ENCODE measurements at regions of chr2 and their contacts with region 1.

Region 1: DNA sequence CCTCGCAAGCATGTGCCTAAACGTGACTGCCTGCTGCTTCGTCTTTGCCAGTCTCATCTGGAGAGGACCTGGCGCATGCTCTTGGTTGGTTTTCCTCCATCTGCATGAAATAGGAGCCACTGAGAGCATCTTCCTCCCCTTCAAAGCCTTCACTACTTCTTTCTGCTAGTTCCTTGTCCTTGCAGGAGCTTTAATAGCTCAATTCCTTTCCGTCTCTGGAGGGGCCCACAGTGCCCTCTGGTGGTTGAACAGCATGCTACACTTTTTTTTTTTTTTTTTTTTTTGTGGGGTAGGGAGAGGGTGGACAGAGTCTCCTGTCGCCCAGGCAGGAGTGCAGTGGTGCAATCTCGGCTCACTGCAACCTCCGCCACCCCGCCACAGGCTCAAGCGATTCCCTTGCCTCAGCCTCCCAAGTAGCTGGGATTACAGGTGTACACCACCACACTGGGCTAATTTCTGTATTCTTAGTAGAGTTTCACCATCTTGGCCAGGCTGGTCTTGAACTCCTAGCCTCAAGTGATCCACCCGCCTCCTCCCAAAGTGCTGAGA is 59.6 kb downstream of the SP110 start:
- DNase-seq: peak in 3 of 5 donors; percentile 45 to 66 (median 52)
- ATAC-seq: peak; percentile 25 to 76 (median 70)
- H3K4me3 ChIP-seq: no peak overlapping the region
- H3K27ac ChIP-seq: no peak overlapping the region
- H3K4me1 ChIP-seq: peaks cover 0 to 4% (median 0%) of the 10 kb centered on the region in 12 donors
- H3K27me3 ChIP-seq: no peaks in the 10 kb centered on the region
- CTCF ChIP-seq: peak; percentile 61 to 85 (median 81)
- POLR2A ChIP-seq: no peak

Region 2: DNA sequence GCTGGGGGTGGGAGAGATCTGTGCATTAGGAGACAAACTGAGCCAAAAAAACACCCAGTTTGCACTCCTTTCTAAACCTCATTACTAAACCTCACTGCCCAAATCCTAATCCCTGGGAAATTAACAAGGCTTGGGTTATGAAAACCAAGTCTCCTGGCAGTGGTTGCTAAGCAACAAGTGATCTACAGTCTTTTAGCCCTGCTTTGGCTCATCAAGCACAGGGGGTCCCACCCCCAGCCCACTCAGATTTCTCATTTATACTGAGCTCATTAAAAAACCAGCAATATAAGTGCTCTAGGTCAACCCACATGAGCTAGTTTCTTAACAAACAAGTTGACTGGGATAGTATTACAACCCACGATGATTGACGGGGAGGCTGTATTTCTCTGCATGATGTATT is 464.2 kb before region 1 on chr2:
- intact Hi-C with region 1: no loop called
- DNase-seq: no peak
- ATAC-seq: no peak
- H3K4me3 ChIP-seq: no peak overlapping the region
- H3K27ac ChIP-seq: no peak overlapping the region
- H3K4me1 ChIP-seq: no peaks in the 10 kb centered on the region
- H3K27me3 ChIP-seq: peaks cover 0 to 3% (median 0%) of the 10 kb centered on the region in 9 donors
- CTCF ChIP-seq: no peak
- POLR2A ChIP-seq: no peak

Region 3: DNA sequence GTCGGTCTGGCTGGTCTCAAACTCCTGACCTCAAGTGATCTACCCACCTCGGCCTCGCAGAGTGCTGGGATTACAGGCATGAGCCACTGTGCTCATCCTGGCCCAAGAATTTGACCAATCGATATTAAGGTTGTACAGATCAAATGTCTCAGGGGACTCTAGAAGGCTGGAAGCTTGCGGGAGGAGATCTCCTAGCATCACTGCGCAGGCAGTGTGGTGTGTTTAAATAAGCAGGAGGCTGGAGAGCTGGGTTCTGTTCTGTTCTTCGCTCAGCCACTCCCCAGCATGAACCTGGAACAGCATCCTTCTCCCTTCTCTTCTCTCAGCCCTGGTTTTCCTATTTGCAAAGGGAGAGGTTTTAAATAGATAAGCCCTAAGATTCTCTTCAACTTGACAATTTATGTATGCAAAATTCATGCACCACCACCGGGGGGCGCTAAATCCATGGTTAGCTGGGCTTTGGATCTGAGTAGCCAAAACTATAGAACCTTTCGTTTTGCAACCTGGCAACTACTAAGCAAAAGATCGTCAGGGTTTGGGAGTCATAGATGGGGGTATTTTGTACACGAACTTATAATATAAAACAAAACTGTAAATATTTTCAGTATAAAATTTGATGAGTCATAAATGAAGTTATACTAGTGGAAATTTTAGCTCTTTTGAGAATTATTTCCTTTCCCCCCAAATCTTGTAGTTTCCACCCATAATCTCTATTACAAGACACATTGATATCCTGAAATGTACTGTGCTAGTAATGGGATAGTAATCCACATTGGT is 152.1 kb before region 1 on chr2:
- intact Hi-C with region 1: loop called (anchors 1 to 5 kb)
- DNase-seq: peak; percentile 56 to 84 (median 69)
- ATAC-seq: peak; percentile 47 to 62 (median 58)
- H3K4me3 ChIP-seq: peak overlapping the region in 7 of 12 donors; percentile 4 to 36 (median 20)
- H3K27ac ChIP-seq: no peak overlapping the region
- H3K4me1 ChIP-seq: peaks cover 0 to 9% (median 2%) of the 10 kb centered on the region in 12 donors
- H3K27me3 ChIP-seq: no peaks in the 10 kb centered on the region
- CTCF ChIP-seq: peak; percentile 77 to 87 (median 83)
- POLR2A ChIP-seq: no peak

Region 4: DNA sequence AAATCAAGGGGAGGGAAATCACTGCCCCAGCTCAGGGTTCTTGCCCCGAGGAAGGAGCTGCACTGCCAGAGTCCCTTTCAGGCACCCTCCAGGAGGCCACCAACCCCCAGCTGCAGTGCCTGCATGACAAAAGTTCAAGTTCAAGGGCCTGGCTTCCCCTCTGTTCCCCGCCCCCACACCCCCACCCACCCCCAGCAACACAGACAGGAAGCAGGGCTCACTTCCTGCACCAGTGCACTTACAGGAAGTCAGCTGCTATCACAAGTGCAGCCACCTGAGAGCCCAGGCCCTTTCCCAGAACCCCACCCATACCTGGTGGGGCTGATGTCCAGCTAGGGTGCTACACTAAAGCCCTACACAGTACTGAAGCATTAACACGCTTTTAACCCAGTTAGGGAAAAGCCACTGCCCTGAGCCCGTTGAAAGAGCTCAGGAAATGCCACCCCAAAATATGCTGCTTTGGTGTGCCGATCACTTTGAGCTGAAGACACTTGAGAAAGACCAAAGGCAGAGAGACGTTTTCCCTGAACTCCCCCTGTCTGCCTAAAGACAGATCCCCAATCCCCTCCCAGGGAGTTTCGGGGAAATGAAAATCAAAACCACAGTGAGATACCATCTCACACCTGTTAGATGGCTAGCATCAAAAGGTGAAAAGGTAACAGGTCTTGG is 442.5 kb after region 1 on chr2:
- intact Hi-C with region 1: loop called in 3 of 10 experiments (anchors 5 to 10 kb)
- DNase-seq: no peak
- ATAC-seq: peak in 1 of 4 donors; percentile 22
- H3K4me3 ChIP-seq: no peak overlapping the region
- H3K27ac ChIP-seq: peak overlapping the region in 1 of 12 donors; percentile 70
- H3K4me1 ChIP-seq: peaks cover 0 to 11% (median 0%) of the 10 kb centered on the region in 12 donors
- H3K27me3 ChIP-seq: no peaks in the 10 kb centered on the region
- CTCF ChIP-seq: no peak
- POLR2A ChIP-seq: no peak

Measured in heart left ventricle (tissue), 16 donors.